ENCODE measurements at regions of chr1 and their contacts with region 1.

Region 1: DNA sequence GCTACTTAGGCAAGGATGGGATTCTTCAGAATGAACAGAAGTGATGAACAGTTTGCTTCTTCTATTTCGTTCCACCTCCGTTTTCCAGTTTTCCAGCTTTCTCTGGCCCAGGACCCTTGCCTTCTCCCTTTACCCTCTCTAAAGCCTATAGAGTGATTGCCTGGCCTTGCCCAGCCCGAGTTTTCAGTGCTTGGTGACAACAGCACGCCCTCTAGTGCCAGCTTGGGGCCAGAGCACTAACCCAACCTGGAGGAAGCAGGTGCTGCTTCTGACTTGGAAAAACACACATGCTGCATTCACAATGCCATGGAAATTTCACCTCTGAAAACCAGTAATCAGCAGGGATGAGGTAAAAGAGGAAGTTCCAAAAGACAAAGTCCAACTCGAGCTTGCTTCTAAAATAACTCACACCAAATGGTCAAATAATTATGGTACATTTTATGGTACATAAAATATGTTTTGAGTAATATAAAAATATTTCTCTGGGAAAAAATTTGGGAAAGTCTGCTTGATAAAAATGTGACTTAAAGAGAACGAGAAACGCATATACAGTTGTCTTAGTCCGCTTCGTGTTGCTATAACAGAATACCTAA is 26.1 kb downstream of the UBE2T start:
- DNase-seq: peak; percentile 73
- ATAC-seq: peak; percentile 80 to 83

Region 2: GRCh38 chr1:202018468-202019255 is 297.0 kb before region 1 on chr1:
- intact Hi-C with region 1: no loop called
- DNase-seq: no peak
- ATAC-seq: peak in 1 of 2 donors; percentile 45

Region 3: GRCh38 chr1:202184750-202185460 is 130.8 kb before region 1 on chr1:
- intact Hi-C with region 1: loop called (anchors 2 to 5 kb)
- DNase-seq: peak; percentile 85
- ATAC-seq: peak; percentile 75 to 79

Region 4: DNA sequence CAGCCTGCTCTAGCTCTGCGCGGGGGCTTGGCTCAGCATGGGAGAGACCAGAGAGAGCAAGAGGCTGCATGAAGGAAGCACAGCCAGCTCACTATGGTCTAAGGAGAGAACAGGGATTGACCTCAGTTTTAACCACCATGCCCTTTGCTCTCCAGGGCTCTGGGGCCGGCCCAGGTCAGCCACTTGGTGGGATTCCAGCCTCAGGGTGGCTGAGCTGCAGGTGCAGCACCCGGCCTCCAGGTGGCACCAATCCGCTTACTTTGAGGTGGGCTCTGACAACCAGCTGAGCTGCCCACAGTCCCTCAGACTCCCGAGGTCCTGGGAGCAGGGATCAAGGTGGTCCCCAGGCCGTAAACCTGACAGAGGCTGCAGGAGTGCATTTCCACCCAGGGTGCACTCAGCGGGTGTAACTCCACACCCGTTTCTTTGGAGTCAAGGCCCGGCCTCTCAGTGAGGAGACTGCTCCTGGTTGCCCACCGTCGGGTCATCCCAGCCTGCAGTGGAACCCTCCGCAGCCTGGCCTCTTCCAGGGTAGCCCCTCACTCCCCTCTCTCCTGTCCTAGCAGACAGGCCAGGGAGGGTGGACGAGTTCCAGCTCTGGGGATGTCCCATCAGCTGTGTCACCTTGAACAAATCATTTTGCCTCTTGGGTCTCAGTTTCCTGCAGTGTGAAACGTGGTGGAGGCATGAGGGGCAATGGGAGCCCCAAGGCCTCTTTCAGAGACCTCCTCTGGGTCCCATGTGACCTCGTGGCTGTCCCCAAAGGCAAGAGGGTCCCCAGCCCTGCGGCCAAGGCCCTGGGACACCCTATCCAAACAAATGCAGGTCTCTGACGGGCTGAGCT is 122.7 kb before region 1 on chr1:
- intact Hi-C with region 1: loop called (anchors 2 to 5 kb)
- DNase-seq: peak; percentile 68
- ATAC-seq: peak; percentile 72 to 73

Region 5: GRCh38 chr1:202207292-202207691 is 108.4 kb before region 1 on chr1:
- intact Hi-C with region 1: loop called in 1 of 2 experiments (anchors 5 kb)
- DNase-seq: peak; percentile 48
- ATAC-seq: peak; percentile 56 to 58

Region 6: GRCh38 chr1:202274611-202275010 is 41.1 kb before region 1 on chr1:
- intact Hi-C with region 1: loop called in 1 of 2 experiments (anchors 5 kb)
- DNase-seq: no peak
- ATAC-seq: peak in 1 of 2 donors; percentile 21

Region 7: GRCh38 chr1:202728951-202729350 is 413.3 kb after region 1 on chr1:
- intact Hi-C with region 1: loop called in 1 of 2 experiments (anchors 10 kb)
- DNase-seq: no peak
- ATAC-seq: no peak